IMR-90 (cell line): ENCODE measurements at regions of chr1 and their contacts with region 1.

Region 1: GRCh38 chr1:36149237-36149972 is at the start of gene TRAPPC3:
- DNase-seq: peak; percentile 100
- ATAC-seq: peak; percentile 90
- H3K4me3 ChIP-seq: peak within 1 kb of the TSS; percentile 67
- H3K27ac ChIP-seq: peak within 1 kb of the TSS; percentile 97
- H3K4me1 ChIP-seq: peaks cover 17% of the 10 kb centered on the region
- H3K27me3 ChIP-seq: no peaks in the 10 kb centered on the region
- CTCF ChIP-seq: peak; percentile 99
- POLR2A ChIP-seq: peak; percentile 80
- RAD21 ChIP-seq: peak; percentile 97
- total RNA-seq, gene TRAPPC3: 76.0 and 101 TPM in 2 replicates

Region 2: GRCh38 chr1:36134505-36135329 is 14.7 kb before region 1 on chr1:
- CTCF ChIA-PET with region 1: interaction called, 19 read pairs
- POLR2A ChIA-PET with region 1: no interaction called
- dilution Hi-C with region 1: no loop called
- in situ Hi-C with region 1: no loop called
- intact Hi-C with region 1: no loop called
- DNase-seq: peak; percentile 38
- ATAC-seq: peak; percentile 40
- H3K4me3 ChIP-seq: no peak overlapping the region
- H3K27ac ChIP-seq: no peak overlapping the region
- H3K4me1 ChIP-seq: peaks cover 26% of the 10 kb centered on the region
- H3K27me3 ChIP-seq: no peaks in the 10 kb centered on the region
- CTCF ChIP-seq: peak; percentile 64
- POLR2A ChIP-seq: no peak
- RAD21 ChIP-seq: peak; percentile 76

Region 3: GRCh38 chr1:36217670-36218069 is 68.3 kb after region 1 on chr1:
- CTCF ChIA-PET with region 1: interaction called, 4 read pairs
- POLR2A ChIA-PET with region 1: no interaction called
- dilution Hi-C with region 1: no loop called
- in situ Hi-C with region 1: no loop called
- intact Hi-C with region 1: loop called (anchors 2 kb)
- DNase-seq: peak; percentile 48
- ATAC-seq: peak; percentile 76; the same call in 1 of the 2 replicates
- H3K4me3 ChIP-seq: no peak overlapping the region
- H3K27ac ChIP-seq: no peak overlapping the region
- H3K4me1 ChIP-seq: no peaks in the 10 kb centered on the region
- H3K27me3 ChIP-seq: no peaks in the 10 kb centered on the region
- CTCF ChIP-seq: peak; percentile 45
- POLR2A ChIP-seq: no peak
- RAD21 ChIP-seq: peak; percentile 51

Region 4: GRCh38 chr1:36223993-36224536 is 74.7 kb after region 1 on chr1 and contains the start of gene THRAP3:
- CTCF ChIA-PET with region 1: interaction called, 5 read pairs
- POLR2A ChIA-PET with region 1: no interaction called
- dilution Hi-C with region 1: no loop called
- in situ Hi-C with region 1: no loop called
- intact Hi-C with region 1: loop called (anchors 2 kb)
- DNase-seq: peak; percentile 99
- ATAC-seq: peak; percentile 96
- H3K4me3 ChIP-seq: peak within 1 kb of the TSS; percentile 72
- H3K27ac ChIP-seq: peak within 1 kb of the TSS; percentile 94
- H3K4me1 ChIP-seq: peaks cover 3% of the 10 kb centered on the region
- H3K27me3 ChIP-seq: no peaks in the 10 kb centered on the region
- CTCF ChIP-seq: no peak
- POLR2A ChIP-seq: peak; percentile 95
- RAD21 ChIP-seq: 0 out of 2 replicates have a peak, but pooled peaks have one; percentile 17
- total RNA-seq, gene THRAP3: 66.5 and 73.9 TPM in 2 replicates

Region 5: GRCh38 chr1:36285448-36286101 is 136.2 kb after region 1 on chr1:
- CTCF ChIA-PET with region 1: interaction called, 15 read pairs
- POLR2A ChIA-PET with region 1: no interaction called
- dilution Hi-C with region 1: no loop called
- in situ Hi-C with region 1: loop called (anchors 5 kb)
- intact Hi-C with region 1: loop called (anchors 1 kb)
- DNase-seq: peak; percentile 92
- ATAC-seq: peak; percentile 97
- H3K4me3 ChIP-seq: no peak overlapping the region
- H3K27ac ChIP-seq: no peak overlapping the region
- H3K4me1 ChIP-seq: peaks cover 3% of the 10 kb centered on the region
- H3K27me3 ChIP-seq: no peaks in the 10 kb centered on the region
- CTCF ChIP-seq: peak; percentile 85
- POLR2A ChIP-seq: no peak
- RAD21 ChIP-seq: peak; percentile 85

Region 6: DNA sequence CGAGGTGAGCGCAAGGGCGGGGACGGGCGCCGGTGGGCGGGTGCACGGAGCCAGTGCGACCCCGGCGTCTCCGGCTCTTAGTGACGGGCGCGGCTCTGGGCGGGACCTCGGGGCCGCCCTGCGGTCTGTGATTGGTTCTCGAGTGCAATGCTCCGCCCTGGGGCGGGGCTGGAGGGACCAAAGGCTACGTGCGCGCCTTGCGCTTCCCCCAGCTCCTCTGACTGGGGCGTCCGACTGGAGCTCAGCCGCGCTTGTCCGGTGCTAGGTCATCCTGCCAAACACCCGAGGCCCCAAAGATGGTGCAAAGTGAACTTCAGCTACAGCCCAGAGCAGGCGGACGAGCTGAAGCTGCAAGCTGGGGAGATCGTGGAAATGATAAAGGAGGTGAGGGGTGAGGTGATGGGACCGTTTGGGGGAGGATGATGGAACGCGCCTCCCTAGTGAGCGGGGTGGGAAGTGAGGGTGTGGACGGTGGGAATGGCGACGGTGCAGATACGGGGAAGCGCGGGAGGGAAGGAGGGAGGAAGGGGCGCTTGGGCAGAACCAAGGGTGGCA is 157.6 kb after region 1 on chr1:
- CTCF ChIA-PET with region 1: no interaction called
- POLR2A ChIA-PET with region 1: no interaction called
- dilution Hi-C with region 1: no loop called
- in situ Hi-C with region 1: no loop called
- intact Hi-C with region 1: no loop called
- DNase-seq: peak; percentile 91
- ATAC-seq: peak; percentile 99
- H3K4me3 ChIP-seq: peak overlapping the region; percentile 61
- H3K27ac ChIP-seq: peak overlapping the region; percentile 47
- H3K4me1 ChIP-seq: peaks cover 8% of the 10 kb centered on the region
- H3K27me3 ChIP-seq: no peaks in the 10 kb centered on the region
- CTCF ChIP-seq: no peak
- POLR2A ChIP-seq: peak; percentile 96
- RAD21 ChIP-seq: no peak

Region 7: GRCh38 chr1:36492504-36492903 is 343.1 kb after region 1 on chr1:
- CTCF ChIA-PET with region 1: no interaction called
- POLR2A ChIA-PET with region 1: no interaction called
- dilution Hi-C with region 1: no loop called
- in situ Hi-C with region 1: no loop called
- intact Hi-C with region 1: no loop called
- DNase-seq: no peak
- ATAC-seq: no peak
- H3K4me3 ChIP-seq: no peak overlapping the region
- H3K27ac ChIP-seq: no peak overlapping the region
- H3K4me1 ChIP-seq: no peaks in the 10 kb centered on the region
- H3K27me3 ChIP-seq: peaks cover 15% of the 10 kb centered on the region
- CTCF ChIP-seq: no peak
- POLR2A ChIP-seq: no peak
- RAD21 ChIP-seq: no peak